MCF 10A (cell line): ENCODE measurements at regions of chr22 and their contacts with region 1.

Region 1: DNA sequence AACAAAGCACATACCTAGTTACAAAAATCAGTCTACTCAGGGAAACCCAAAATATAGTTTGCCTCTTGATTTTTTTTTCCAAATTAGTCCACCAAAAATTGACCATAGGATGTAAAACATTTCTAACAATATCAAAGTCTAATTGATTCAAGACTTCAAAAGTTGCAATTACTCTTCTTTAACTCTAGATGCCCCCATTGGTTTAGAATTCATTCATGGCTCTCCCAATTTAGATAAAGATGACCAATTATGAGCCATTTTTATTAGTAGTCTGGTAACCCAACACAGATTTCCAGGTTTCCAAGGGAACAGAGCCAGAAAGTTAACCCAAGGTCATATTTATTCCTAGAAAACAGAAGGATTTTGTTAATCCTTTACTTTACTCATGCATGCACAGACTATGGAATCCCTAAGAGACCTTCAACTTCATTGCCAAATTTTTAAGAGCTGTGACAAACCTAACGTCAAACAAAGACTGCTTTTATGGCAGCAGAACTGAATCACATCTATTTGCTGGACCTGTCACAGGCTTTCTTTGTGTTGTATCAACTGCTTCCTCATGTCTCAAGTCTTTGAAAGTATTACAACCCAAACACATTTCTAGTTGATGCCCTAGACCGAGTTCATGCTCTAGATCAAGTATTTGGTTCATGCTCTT is 55.3 kb downstream of the C22orf42 start:
- DNase-seq: peak; percentile 17
- H3K4me3 Mint-ChIP-seq: no peak overlapping the region
- H3K27ac Mint-ChIP-seq: no peak overlapping the region
- H3K4me1 Mint-ChIP-seq: no peaks in the 10 kb centered on the region
- H3K27me3 Mint-ChIP-seq: peaks cover 62% of the 10 kb centered on the region
- CTCF ChIP-seq: peak; percentile 45

Region 2: DNA sequence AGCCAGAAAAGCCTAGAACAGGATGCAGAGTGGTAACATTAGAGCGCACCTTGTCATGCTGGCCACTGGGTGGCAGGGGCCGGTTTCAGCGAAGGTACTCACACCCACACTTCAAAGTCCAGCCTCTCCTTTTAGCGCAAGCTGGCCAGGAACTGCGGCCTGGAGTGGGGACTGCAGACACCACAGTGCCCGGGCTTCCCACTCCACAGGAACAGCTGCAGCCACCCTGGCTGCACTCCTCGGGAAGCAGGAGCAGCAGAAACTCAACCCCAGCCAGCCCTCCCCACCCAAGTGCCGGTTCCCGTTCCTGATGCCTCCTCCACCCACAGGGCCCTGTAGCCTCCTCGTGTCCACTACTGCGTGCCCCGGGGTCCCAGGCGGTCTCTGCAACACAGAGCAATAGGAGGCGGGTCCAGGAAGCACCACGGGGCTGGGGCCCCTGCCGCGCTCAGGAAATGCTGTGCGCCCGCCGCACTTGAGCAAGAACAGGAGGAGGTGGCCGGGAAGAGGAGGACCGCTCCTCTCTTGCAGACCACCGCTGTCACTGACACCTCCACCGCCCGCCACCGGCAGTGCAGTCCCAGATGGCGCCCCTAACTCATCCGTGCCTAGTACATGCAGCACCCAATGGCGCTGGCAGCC is 98.9 kb after region 1 on chr22:
- CTCF ChIA-PET with region 1: interaction called, 9 read pairs
- POLR2A ChIA-PET with region 1: no interaction called
- intact Hi-C with region 1: loop called (anchors 1 kb)
- DNase-seq: peak; percentile 64
- H3K4me3 Mint-ChIP-seq: no peak overlapping the region
- H3K27ac Mint-ChIP-seq: no peak overlapping the region
- H3K4me1 Mint-ChIP-seq: peaks cover 6% of the 10 kb centered on the region
- H3K27me3 Mint-ChIP-seq: peaks cover 17% of the 10 kb centered on the region
- CTCF ChIP-seq: peak; percentile 61

Region 3: DNA sequence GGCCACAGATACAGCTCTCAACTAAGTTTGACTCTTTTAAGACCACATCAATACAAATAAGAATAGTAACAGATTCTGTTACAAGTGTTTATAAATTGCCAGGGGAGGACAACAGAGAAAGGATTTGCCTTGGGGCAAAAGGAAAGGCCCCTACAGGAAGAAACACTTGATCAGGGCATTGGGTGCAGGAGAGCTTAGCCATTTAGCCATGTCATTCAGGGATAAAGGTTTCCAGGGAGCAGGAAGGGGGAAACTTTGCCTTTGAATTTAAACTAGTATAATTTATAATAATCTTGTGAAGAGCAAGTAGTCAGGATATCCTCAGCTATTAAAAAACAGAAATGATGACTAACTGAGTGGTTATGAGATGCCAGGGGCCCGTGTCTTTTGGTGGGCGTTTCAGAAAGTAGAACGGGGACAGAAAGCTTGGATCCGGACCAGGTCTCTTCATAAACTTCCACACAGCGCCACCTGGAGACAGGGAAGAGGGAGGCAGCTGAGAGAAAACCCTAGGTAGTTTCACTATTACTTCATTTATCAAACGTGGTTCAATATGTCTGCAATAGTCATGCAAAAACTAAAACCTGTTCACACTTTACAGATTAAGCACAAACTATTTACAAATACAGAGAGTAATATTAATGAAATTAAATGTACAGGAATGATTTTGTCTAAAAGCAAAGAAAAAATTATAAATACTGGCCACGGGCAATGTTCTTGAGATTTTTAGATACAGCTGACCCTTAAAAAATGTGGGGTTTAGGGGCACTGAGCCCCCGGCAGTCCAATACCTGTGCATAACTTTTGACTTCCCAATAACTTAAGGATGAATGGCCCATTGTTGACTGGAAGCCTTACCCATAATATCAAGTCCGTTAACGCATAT is 162.3 kb after region 1 on chr22:
- CTCF ChIA-PET with region 1: interaction called, 44 read pairs
- POLR2A ChIA-PET with region 1: no interaction called
- intact Hi-C with region 1: loop called (anchors 1 kb)
- DNase-seq: peak; percentile 82
- H3K4me3 Mint-ChIP-seq: peak overlapping the region; percentile 41
- H3K27ac Mint-ChIP-seq: no peak overlapping the region
- H3K4me1 Mint-ChIP-seq: peaks cover 8% of the 10 kb centered on the region
- H3K27me3 Mint-ChIP-seq: peaks cover 6% of the 10 kb centered on the region
- CTCF ChIP-seq: peak; percentile 90

Region 4: GRCh38 chr22:32354360-32355351 is 250.9 kb after region 1 on chr22:
- CTCF ChIA-PET with region 1: interaction called, 4 read pairs
- POLR2A ChIA-PET with region 1: no interaction called
- intact Hi-C with region 1: loop called (anchors 1 kb)
- DNase-seq: no peak
- H3K4me3 Mint-ChIP-seq: no peak overlapping the region
- H3K27ac Mint-ChIP-seq: no peak overlapping the region
- H3K4me1 Mint-ChIP-seq: no peaks in the 10 kb centered on the region
- H3K27me3 Mint-ChIP-seq: peaks cover 56% of the 10 kb centered on the region
- CTCF ChIP-seq: no peak

Region 5: GRCh38 chr22:32378707-32379272 is 275.0 kb after region 1 on chr22:
- CTCF ChIA-PET with region 1: interaction called, 3 read pairs
- POLR2A ChIA-PET with region 1: no interaction called
- intact Hi-C with region 1: loop called (anchors 5 kb)
- DNase-seq: peak; percentile 72
- H3K4me3 Mint-ChIP-seq: no peak overlapping the region
- H3K27ac Mint-ChIP-seq: no peak overlapping the region
- H3K4me1 Mint-ChIP-seq: no peaks in the 10 kb centered on the region
- H3K27me3 Mint-ChIP-seq: peaks cover 29% of the 10 kb centered on the region
- CTCF ChIP-seq: peak; percentile 71

Region 6: GRCh38 chr22:32444068-32444467 is 340.3 kb after region 1 on chr22:
- CTCF ChIA-PET with region 1: interaction called, 6 read pairs
- POLR2A ChIA-PET with region 1: no interaction called
- intact Hi-C with region 1: loop called (anchors 1 kb)
- DNase-seq: peak; percentile 25
- H3K4me3 Mint-ChIP-seq: no peak overlapping the region
- H3K27ac Mint-ChIP-seq: no peak overlapping the region
- H3K4me1 Mint-ChIP-seq: peaks cover 4% of the 10 kb centered on the region
- H3K27me3 Mint-ChIP-seq: no peaks in the 10 kb centered on the region
- CTCF ChIP-seq: peak; percentile 31

Region 7: DNA sequence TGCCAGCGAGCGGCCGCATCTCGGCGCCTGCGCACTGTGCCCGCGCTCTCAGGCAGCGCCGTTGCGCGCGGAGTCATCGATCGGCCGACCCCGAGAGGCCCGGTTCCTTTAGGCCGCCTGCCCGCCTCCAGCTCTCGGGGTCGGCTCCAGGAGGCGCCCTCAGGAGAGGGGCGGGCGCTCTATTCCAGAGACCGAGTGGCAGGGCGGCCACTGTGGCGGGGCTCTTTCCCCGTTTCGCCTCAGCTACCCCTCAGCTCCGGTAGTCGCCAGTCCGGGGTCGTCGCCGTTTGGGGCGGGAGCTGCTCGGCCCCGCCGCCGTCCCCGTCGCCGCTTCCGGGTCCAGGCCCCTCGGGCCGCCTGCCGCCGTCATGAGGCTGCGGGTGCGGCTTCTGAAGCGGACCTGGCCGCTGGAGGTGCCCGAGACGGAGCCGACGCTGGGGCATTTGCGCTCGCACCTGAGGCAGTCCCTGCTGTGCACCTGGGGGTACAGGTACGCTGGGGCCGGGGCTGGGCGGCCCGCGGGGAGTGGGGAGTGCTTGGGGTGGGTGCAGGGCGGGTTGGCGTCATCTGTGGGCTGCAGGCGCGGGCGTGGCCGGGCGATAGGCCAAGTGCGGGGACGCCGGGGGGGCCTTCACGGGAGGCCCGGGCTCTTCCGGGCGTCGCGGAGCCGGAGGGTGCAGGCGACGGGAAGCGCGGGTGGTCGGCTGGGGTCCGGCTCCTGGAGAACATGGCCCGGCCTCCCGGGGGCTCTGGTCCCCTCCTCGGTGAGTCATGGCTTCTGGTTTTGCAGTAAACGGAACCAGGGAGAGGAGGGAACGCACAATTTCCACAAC is 371.1 kb after region 1 on chr22 and contains the start of gene FBXO7:
- CTCF ChIA-PET with region 1: interaction called, 7 read pairs
- POLR2A ChIA-PET with region 1: interaction called, 4 read pairs
- intact Hi-C with region 1: loop called (anchors 10 kb)
- DNase-seq: peak; percentile 89
- H3K4me3 Mint-ChIP-seq: peak within 1 kb of the TSS; percentile 98
- H3K27ac Mint-ChIP-seq: peak within 1 kb of the TSS; percentile 96
- H3K4me1 Mint-ChIP-seq: peaks cover 12% of the 10 kb centered on the region
- H3K27me3 Mint-ChIP-seq: no peaks in the 10 kb centered on the region
- CTCF ChIP-seq: peak; percentile 13
- total RNA-seq, gene FBXO7: 59.8 and 76.9 TPM in 2 replicates